ENCODE measurements at regions of chr7 and their contacts with region 1.

Region 1: GRCh38 chr7:23273141-23273599 is 26.0 kb upstream of the MALSU1 start:
- DNase-seq: peak; percentile 93
- H3K4me3 ChIP-seq: peak overlapping the region; percentile 57
- H3K27ac ChIP-seq: peak overlapping the region; percentile 7
- H3K4me1 ChIP-seq: peaks cover 15% of the 10 kb centered on the region
- CTCF ChIP-seq: peak; percentile 95

Region 2: DNA sequence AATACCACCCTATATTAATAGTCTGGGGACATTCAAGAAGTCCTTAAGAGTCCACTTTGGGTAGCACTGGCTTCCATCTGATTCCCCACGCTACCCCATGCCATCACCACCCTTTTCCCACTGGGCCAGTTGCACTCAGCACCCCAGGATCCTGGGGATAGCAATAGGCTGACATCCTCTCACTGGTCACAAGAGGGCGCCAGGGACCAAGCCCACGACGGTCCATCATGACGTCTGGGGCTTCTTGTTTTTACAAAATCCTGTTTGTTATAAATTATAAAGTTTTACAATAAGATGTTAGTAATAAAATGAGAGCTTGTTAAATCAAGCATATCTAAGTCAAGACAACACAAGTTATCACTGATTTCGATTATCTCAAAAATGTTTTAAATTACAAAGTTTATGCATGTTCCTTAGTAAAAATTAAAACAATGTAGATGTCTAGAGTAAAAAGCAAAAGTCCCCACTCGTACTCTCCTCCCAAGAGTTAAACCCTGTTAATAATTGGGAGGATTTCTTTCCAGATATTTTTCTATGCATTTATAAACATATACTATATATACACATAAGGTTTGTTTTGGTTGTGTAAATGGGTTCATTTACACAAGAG is 11.2 kb before region 1 on chr7:
- CTCF ChIA-PET with region 1: interaction called, 15 read pairs
- POLR2A ChIA-PET with region 1: interaction called, 12 read pairs
- intact Hi-C with region 1: no loop called
- DNase-seq: peak; percentile 76
- H3K4me3 ChIP-seq: no peak overlapping the region
- H3K27ac ChIP-seq: no peak overlapping the region
- H3K4me1 ChIP-seq: no peaks in the 10 kb centered on the region
- CTCF ChIP-seq: peak; percentile 98

Region 3: DNA sequence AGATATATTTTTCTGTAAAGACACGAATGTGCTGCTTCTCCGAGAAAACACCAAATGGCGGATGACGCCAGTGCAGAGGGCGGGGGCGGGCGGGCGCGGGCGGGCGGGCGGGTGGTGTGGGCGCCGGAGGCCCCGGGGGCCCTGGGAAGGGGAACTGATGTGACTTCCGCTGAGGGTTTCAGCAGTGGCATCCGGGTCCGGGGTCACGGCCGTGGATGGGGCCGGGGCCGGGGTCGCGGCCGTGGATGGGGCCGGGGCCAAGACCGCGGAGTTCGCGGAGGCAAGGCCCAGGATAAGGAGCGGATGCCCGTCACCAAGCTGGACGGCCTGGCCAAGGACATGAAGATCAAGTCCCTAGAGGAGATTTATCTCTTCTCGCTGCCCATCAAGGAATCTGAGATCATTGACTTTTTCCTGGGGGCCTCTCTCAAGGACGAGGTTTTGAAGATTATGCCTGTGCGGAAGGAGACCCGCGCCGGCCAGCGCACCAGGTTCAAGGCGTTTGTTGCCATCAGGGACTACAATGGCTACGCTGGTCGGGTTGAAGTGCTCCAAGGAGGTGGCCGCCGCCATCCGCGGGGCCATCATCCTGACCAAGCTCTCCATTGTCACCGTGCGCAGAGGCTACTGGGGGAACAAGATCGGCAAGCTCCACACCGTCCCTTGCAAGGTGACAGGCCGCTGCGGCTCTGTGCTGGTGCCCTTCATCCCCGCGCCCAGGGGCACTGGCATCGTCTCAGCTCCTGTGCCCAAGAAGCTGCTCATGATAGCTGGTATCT is 217.4 kb after region 1 on chr7:
- CTCF ChIA-PET with region 1: no interaction called
- POLR2A ChIA-PET with region 1: no interaction called
- intact Hi-C with region 1: loop called (anchors 5 kb)
- DNase-seq: peak; percentile 85
- H3K4me3 ChIP-seq: peak overlapping the region; percentile 92
- H3K27ac ChIP-seq: peak overlapping the region; percentile 77
- H3K4me1 ChIP-seq: peaks cover 12% of the 10 kb centered on the region
- CTCF ChIP-seq: no peak

Measured in OCI-LY7 (cell line).